PC-9 (cell line): ENCODE measurements at regions of chr13 and their contacts with region 1.

Region 1: GRCh38 chr13:104422668-104423067 is 1356.5 kb upstream of the SLC10A2 start:
- DNase-seq: no peak
- H3K4me3 ChIP-seq: no peak overlapping the region
- H3K27ac ChIP-seq: no peak overlapping the region
- H3K4me1 ChIP-seq: no peaks in the 10 kb centered on the region
- H3K27me3 ChIP-seq: no peaks in the 10 kb centered on the region
- CTCF ChIP-seq: no peak

Region 2: GRCh38 chr13:106262886-106263285 is 1840.2 kb after region 1 on chr13:
- CTCF ChIA-PET with region 1: interaction called, 18 read pairs
- POLR2A ChIA-PET with region 1: no interaction called
- intact Hi-C with region 1: no loop called
- DNase-seq: peak in 1 of 2 experiments; percentile 52
- H3K4me3 ChIP-seq: no peak overlapping the region
- H3K27ac ChIP-seq: no peak overlapping the region
- H3K4me1 ChIP-seq: no peaks in the 10 kb centered on the region
- H3K27me3 ChIP-seq: no peaks in the 10 kb centered on the region
- CTCF ChIP-seq: no peak